A549 (cell line): ENCODE measurements at regions of chr7 and their contacts with region 1.

Region 1: GRCh38 chr7:142811154-142811737 is 40.5 kb downstream of the PRSS2 start:
- DNase-seq: peak; percentile 50 to 51
- ATAC-seq: peak; percentile 31 to 90; a peak in 3 of 6 replicates
- H3K4me3 ChIP-seq: no peak overlapping the region
- H3K27ac ChIP-seq: no peak overlapping the region
- H3K4me1 ChIP-seq: no peaks in the 10 kb centered on the region
- CTCF ChIP-seq: peak; percentile 67
- EP300 ChIP-seq: no peak
- POLR2A ChIP-seq: no peak
- RAD21 ChIP-seq: peak; percentile 60 to 61

Region 2: DNA sequence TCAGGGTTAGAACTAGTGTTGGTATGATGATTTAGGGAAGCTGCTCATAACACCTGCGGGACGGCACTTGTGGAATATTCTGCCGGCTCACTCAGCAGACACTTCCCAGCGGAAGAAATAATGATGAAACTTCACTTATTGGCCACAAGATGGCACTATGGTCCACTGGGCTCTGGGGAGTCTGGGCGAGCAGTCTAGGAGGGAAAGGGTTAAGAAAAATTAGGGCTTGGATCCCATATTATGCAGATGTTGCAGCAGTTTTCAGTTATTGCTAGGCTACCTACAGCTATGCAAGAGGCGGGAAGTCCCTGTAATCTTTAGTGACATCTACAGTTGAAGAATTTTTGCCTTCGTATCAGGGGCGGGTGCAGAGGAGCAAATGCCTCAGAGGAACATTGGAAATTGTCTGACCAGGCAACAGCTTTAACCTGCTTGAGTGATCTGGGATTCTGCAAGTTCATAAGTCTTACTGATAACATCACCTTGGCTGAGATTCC is 314.7 kb before region 1 on chr7:
- CTCF ChIA-PET with region 1: interaction called, 12 read pairs
- POLR2A ChIA-PET with region 1: no interaction called
- DNase-seq: peak in 1 of 2 experiments; percentile 39
- ATAC-seq: peak; percentile 75 to 88; a peak in 4 of 6 replicates
- H3K4me3 ChIP-seq: no peak overlapping the region
- H3K27ac ChIP-seq: no peak overlapping the region
- H3K4me1 ChIP-seq: no peaks in the 10 kb centered on the region
- CTCF ChIP-seq: peak; percentile 60
- EP300 ChIP-seq: no peak
- POLR2A ChIP-seq: no peak
- RAD21 ChIP-seq: peak; percentile 39 to 54; a peak in 4 of 5 replicates

Region 3: GRCh38 chr7:142603870-142604448 is 207.3 kb before region 1 on chr7:
- CTCF ChIA-PET with region 1: interaction called, 21 read pairs
- POLR2A ChIA-PET with region 1: no interaction called
- DNase-seq: peak; percentile 57 to 66
- ATAC-seq: peak; percentile 43 to 65; a peak in 5 of 6 replicates
- H3K4me3 ChIP-seq: no peak overlapping the region; the same call in 2 of the 3 replicates
- H3K27ac ChIP-seq: no peak overlapping the region
- H3K4me1 ChIP-seq: no peaks in the 10 kb centered on the region
- CTCF ChIP-seq: peak; percentile 86
- EP300 ChIP-seq: no peak
- POLR2A ChIP-seq: no peak
- RAD21 ChIP-seq: peak; percentile 79 to 80

Region 4: GRCh38 chr7:142632291-142633134 is 178.7 kb before region 1 on chr7:
- CTCF ChIA-PET with region 1: interaction called, 34 read pairs
- POLR2A ChIA-PET with region 1: no interaction called
- DNase-seq: peak; percentile 65 to 71
- ATAC-seq: peak; percentile 89 to 97
- H3K4me3 ChIP-seq: no peak overlapping the region
- H3K27ac ChIP-seq: no peak overlapping the region
- H3K4me1 ChIP-seq: no peaks in the 10 kb centered on the region
- CTCF ChIP-seq: peak; percentile 81
- EP300 ChIP-seq: no peak
- POLR2A ChIP-seq: no peak
- RAD21 ChIP-seq: peak; percentile 70 to 77

Region 5: GRCh38 chr7:142771353-142771723 is 39.9 kb before region 1 on chr7:
- CTCF ChIA-PET with region 1: no interaction called
- POLR2A ChIA-PET with region 1: no interaction called
- DNase-seq: no peak
- ATAC-seq: no peak
- H3K4me3 ChIP-seq: no peak overlapping the region
- H3K27ac ChIP-seq: no peak overlapping the region
- H3K4me1 ChIP-seq: no peaks in the 10 kb centered on the region
- CTCF ChIP-seq: no peak
- EP300 ChIP-seq: no peak
- POLR2A ChIP-seq: no peak
- RAD21 ChIP-seq: no peak

Region 6: GRCh38 chr7:142788303-142789289 is 22.6 kb before region 1 on chr7:
- CTCF ChIA-PET with region 1: interaction called, 20 read pairs
- POLR2A ChIA-PET with region 1: no interaction called
- DNase-seq: no peak
- ATAC-seq: no peak
- H3K4me3 ChIP-seq: no peak overlapping the region
- H3K27ac ChIP-seq: no peak overlapping the region
- H3K4me1 ChIP-seq: no peaks in the 10 kb centered on the region
- CTCF ChIP-seq: no peak
- EP300 ChIP-seq: no peak
- POLR2A ChIP-seq: no peak
- RAD21 ChIP-seq: no peak

Region 7: GRCh38 chr7:142796608-142797385 is 14.4 kb before region 1 on chr7:
- CTCF ChIA-PET with region 1: interaction called, 21 read pairs
- POLR2A ChIA-PET with region 1: no interaction called
- DNase-seq: no peak
- ATAC-seq: peak in 1 of 2 experiments; percentile 43; a peak in 3 of 6 replicates
- H3K4me3 ChIP-seq: no peak overlapping the region
- H3K27ac ChIP-seq: no peak overlapping the region
- H3K4me1 ChIP-seq: no peaks in the 10 kb centered on the region
- CTCF ChIP-seq: no peak
- EP300 ChIP-seq: no peak
- POLR2A ChIP-seq: no peak
- RAD21 ChIP-seq: no peak